Naive thymus-derived CD4-positive, alpha-beta T cell (primary cell): ENCODE measurements at regions of chr21 and their contacts with region 1.

Region 1: GRCh38 chr21:15826147-15826780 is 96.5 kb downstream of the USP25 start:
- DNase-seq: peak in 7 of 9 donors; percentile 6 to 51 (median 31)
- ATAC-seq: peak; percentile 68
- H3K4me3 ChIP-seq: no peak overlapping the region
- H3K4me3 Mint-ChIP-seq: peak overlapping the region in 2 of 10 donors; percentile 1 to 6
- H3K27ac ChIP-seq: no peak overlapping the region
- H3K27ac Mint-ChIP-seq: peak overlapping the region in 4 of 9 donors; percentile 1 to 56 (median 36)
- H3K4me1 ChIP-seq: peaks cover 18 to 21% of the 10 kb centered on the region in 2 donors
- H3K4me1 Mint-ChIP-seq: peaks cover 18 to 54% (median 47%) of the 10 kb centered on the region in 7 donors
- H3K27me3 ChIP-seq: no peaks in the 10 kb centered on the region
- H3K27me3 Mint-ChIP-seq: no peaks in the 10 kb centered on the region

Region 2: GRCh38 chr21:15514073-15514946 is 312.0 kb before region 1 on chr21:
- CTCF ChIA-PET with region 1: no interaction called
- POLR2A ChIA-PET with region 1: no interaction called
- intact Hi-C with region 1: loop called in 1 of 2 experiments (anchors 1 kb)
- DNase-seq: peak in 8 of 9 donors; percentile 34 to 87 (median 82)
- ATAC-seq: peak; percentile 99
- H3K4me3 ChIP-seq: peak overlapping the region; percentile 23
- H3K4me3 Mint-ChIP-seq: peak overlapping the region; percentile 59 to 76 (median 69)
- H3K27ac ChIP-seq: peak overlapping the region; percentile 46
- H3K27ac Mint-ChIP-seq: peak overlapping the region; percentile 75 to 94 (median 87)
- H3K4me1 ChIP-seq: peaks cover 12 to 32% of the 10 kb centered on the region in 2 donors
- H3K4me1 Mint-ChIP-seq: peaks cover 16 to 54% (median 31%) of the 10 kb centered on the region in 7 donors
- H3K27me3 ChIP-seq: no peaks in the 10 kb centered on the region
- H3K27me3 Mint-ChIP-seq: no peaks in the 10 kb centered on the region

Region 3: GRCh38 chr21:15624636-15625035 is 201.6 kb before region 1 on chr21:
- CTCF ChIA-PET with region 1: no interaction called
- POLR2A ChIA-PET with region 1: no interaction called
- intact Hi-C with region 1: loop called in 1 of 2 experiments (anchors 5 kb)
- DNase-seq: no peak
- ATAC-seq: no peak
- H3K4me3 ChIP-seq: no peak overlapping the region
- H3K4me3 Mint-ChIP-seq: no peak overlapping the region
- H3K27ac ChIP-seq: no peak overlapping the region
- H3K27ac Mint-ChIP-seq: no peak overlapping the region
- H3K4me1 ChIP-seq: no peaks in the 10 kb centered on the region
- H3K4me1 Mint-ChIP-seq: no peaks in the 10 kb centered on the region
- H3K27me3 ChIP-seq: no peaks in the 10 kb centered on the region
- H3K27me3 Mint-ChIP-seq: peaks cover 0 to 9% (median 2%) of the 10 kb centered on the region in 5 donors

Region 4: GRCh38 chr21:15688809-15689208 is 137.5 kb before region 1 on chr21:
- CTCF ChIA-PET with region 1: no interaction called
- POLR2A ChIA-PET with region 1: no interaction called
- intact Hi-C with region 1: no loop called
- DNase-seq: no peak
- ATAC-seq: no peak
- H3K4me3 ChIP-seq: no peak overlapping the region
- H3K4me3 Mint-ChIP-seq: peak overlapping the region in 1 of 10 donors; percentile 5
- H3K27ac ChIP-seq: no peak overlapping the region
- H3K27ac Mint-ChIP-seq: no peak overlapping the region
- H3K4me1 ChIP-seq: no peaks in the 10 kb centered on the region
- H3K4me1 Mint-ChIP-seq: peaks cover 0 to 3% (median 0%) of the 10 kb centered on the region in 7 donors
- H3K27me3 ChIP-seq: no peaks in the 10 kb centered on the region
- H3K27me3 Mint-ChIP-seq: peaks cover 0 to 4% (median 3%) of the 10 kb centered on the region in 5 donors

Region 5: GRCh38 chr21:15729674-15730483 is 96.4 kb before region 1 on chr21 and contains the start of gene USP25:
- CTCF ChIA-PET with region 1: interaction called, 4 read pairs
- POLR2A ChIA-PET with region 1: interaction called, 5 read pairs
- intact Hi-C with region 1: loop called (anchors 1 kb)
- DNase-seq: peak; percentile 76 to 85 (median 82)
- ATAC-seq: peak; percentile 93
- H3K4me3 ChIP-seq: peak within 1 kb of the TSS; percentile 58
- H3K4me3 Mint-ChIP-seq: peak within 1 kb of the TSS; percentile 92 to 98 (median 97)
- H3K27ac ChIP-seq: peak within 1 kb of the TSS; percentile 83
- H3K27ac Mint-ChIP-seq: peak within 1 kb of the TSS; percentile 85 to 97 (median 94)
- H3K4me1 ChIP-seq: peaks cover 19 to 27% of the 10 kb centered on the region in 2 donors
- H3K4me1 Mint-ChIP-seq: peaks cover 9 to 45% (median 33%) of the 10 kb centered on the region in 7 donors
- H3K27me3 ChIP-seq: no peaks in the 10 kb centered on the region
- H3K27me3 Mint-ChIP-seq: peaks cover 0 to 33% (median 0%) of the 10 kb centered on the region in 5 donors
- total RNA-seq, gene USP25: 51.0 to 67.4 (median 56.5) TPM

Region 6: GRCh38 chr21:15809818-15810217 is 16.4 kb before region 1 on chr21:
- CTCF ChIA-PET with region 1: no interaction called
- POLR2A ChIA-PET with region 1: no interaction called
- intact Hi-C with region 1: loop called in 1 of 2 experiments (anchors 1 kb)
- DNase-seq: no peak
- ATAC-seq: no peak
- H3K4me3 ChIP-seq: no peak overlapping the region
- H3K4me3 Mint-ChIP-seq: no peak overlapping the region
- H3K27ac ChIP-seq: no peak overlapping the region
- H3K27ac Mint-ChIP-seq: peak overlapping the region in 4 of 9 donors; percentile 1 to 67 (median 58)
- H3K4me1 ChIP-seq: no peaks in the 10 kb centered on the region
- H3K4me1 Mint-ChIP-seq: peaks cover 5 to 21% (median 15%) of the 10 kb centered on the region in 7 donors
- H3K27me3 ChIP-seq: no peaks in the 10 kb centered on the region
- H3K27me3 Mint-ChIP-seq: no peaks in the 10 kb centered on the region